MCF 10A (cell line): ENCODE measurements at regions of chr11 and their contacts with region 1.

Region 1: DNA sequence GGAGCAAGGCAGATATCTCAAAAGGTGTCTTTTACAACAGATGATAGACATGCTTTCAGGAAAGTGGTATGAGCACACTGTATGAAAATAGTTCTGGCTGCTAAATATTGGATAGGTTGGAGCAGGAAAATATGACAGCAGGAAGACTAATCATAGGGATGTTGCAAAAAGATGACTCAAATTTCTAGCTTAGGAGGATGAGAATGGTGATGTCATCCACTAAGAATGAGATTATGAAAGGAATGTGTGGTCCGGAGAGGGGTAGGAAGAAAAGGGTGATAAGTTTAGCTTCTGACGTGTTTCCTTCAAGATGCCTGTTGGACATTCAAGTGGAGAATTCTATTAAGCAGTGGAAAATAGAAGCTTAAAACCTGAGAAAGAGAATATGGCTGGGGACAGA is 46.4 kb downstream of the RCN1 start:
- DNase-seq: peak; percentile 80
- H3K4me3 Mint-ChIP-seq: no peak overlapping the region
- H3K27ac Mint-ChIP-seq: peak overlapping the region; percentile 3
- H3K4me1 Mint-ChIP-seq: peaks cover 13% of the 10 kb centered on the region
- H3K27me3 Mint-ChIP-seq: no peaks in the 10 kb centered on the region
- CTCF ChIP-seq: no peak

Region 2: GRCh38 chr11:32090545-32091373 is 46.5 kb before region 1 on chr11 and contains the start of gene RCN1:
- CTCF ChIA-PET with region 1: no interaction called
- POLR2A ChIA-PET with region 1: interaction called, 3 read pairs
- intact Hi-C with region 1: loop called (anchors 1 kb)
- DNase-seq: peak; percentile 60
- H3K4me3 Mint-ChIP-seq: peak within 1 kb of the TSS; percentile 79
- H3K27ac Mint-ChIP-seq: peak within 1 kb of the TSS; percentile 90
- H3K4me1 Mint-ChIP-seq: peaks cover 36% of the 10 kb centered on the region
- H3K27me3 Mint-ChIP-seq: no peaks in the 10 kb centered on the region
- CTCF ChIP-seq: no peak
- total RNA-seq, gene RCN1: 155 and 158 TPM in 2 replicates

Region 3: DNA sequence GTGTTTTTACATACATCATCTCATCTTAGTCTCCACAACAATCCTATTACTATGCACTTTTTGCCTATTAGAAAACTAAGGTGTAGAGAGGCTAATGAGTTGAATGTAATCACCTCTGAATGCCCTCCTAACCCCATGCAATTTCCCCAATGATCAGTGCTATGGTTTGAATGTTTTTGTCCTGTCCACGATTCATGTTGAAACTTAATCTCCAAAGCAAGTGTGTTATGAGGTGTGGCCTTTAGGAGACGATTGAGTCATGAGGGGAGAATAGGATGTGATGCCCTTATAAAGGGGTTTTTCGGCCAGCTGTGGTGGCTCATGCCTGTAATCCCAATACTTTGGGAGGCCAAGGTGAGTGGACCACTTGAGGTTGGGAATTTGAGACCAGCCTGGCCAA is 659.2 kb after region 1 on chr11:
- CTCF ChIA-PET with region 1: no interaction called
- POLR2A ChIA-PET with region 1: no interaction called
- intact Hi-C with region 1: no loop called
- DNase-seq: no peak
- H3K4me3 Mint-ChIP-seq: no peak overlapping the region
- H3K27ac Mint-ChIP-seq: no peak overlapping the region
- H3K4me1 Mint-ChIP-seq: peaks cover 5% of the 10 kb centered on the region
- H3K27me3 Mint-ChIP-seq: no peaks in the 10 kb centered on the region
- CTCF ChIP-seq: no peak